Colonic mucosa (tissue), 4 donors: ENCODE measurements at regions of chr11 and their contacts with region 1.

Region 1: DNA sequence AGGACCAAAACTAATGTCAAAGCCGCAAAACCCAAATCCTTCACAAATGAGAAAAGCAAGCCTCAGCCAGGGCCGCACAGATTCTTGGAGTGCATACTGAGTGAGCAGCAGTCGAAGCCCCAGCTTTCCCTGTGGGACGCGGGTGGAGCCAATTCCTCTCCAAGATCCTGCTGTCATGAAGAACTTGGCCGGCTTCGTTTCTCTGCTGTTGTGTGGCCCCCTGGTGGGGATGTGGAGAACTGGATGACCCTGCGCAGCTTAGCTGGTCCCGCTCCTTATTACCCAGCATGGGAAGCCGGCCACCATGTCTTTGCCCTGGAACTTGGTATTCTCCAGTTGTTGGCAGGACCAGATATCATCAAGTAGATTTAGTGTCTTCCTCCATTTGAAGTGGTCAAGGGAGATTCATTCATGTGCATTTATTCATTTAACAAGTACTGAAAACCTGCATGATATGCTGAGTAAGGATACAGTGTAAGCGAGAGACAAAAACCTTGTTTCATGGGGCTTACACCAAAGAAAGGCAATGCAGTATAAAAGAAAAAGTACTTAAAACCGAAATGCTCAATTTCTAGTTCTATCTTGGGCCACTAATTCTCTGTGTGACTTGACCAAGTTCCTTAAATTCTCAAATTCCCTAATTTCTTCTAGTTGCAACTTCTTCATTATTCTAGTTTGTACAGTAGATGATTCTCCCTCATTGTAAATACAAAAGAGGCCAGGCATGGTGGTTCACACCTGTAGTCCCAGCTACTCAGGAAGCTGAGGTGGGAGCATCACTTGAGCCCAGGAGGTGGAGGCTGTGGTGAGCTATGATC is 56.7 kb upstream of the CRTAM start:
- DNase-seq: peak; percentile 83
- H3K4me3 ChIP-seq: no peak overlapping the region
- H3K27ac ChIP-seq: no peak overlapping the region
- H3K4me1 ChIP-seq: no peaks in the 10 kb centered on the region
- H3K27me3 ChIP-seq: no peaks in the 10 kb centered on the region
- CTCF ChIP-seq: peak; percentile 96

Region 2: GRCh38 chr11:122578168-122578825 is 203.3 kb before region 1 on chr11:
- intact Hi-C with region 1: loop called (anchors 2 kb)
- DNase-seq: no peak
- H3K4me3 ChIP-seq: no peak overlapping the region
- H3K27ac ChIP-seq: no peak overlapping the region
- H3K4me1 ChIP-seq: no peaks in the 10 kb centered on the region
- H3K27me3 ChIP-seq: no peaks in the 10 kb centered on the region
- CTCF ChIP-seq: no peak

Region 3: GRCh38 chr11:122633219-122633829 is 148.3 kb before region 1 on chr11:
- intact Hi-C with region 1: loop called (anchors 2 kb)
- DNase-seq: no peak
- H3K4me3 ChIP-seq: no peak overlapping the region
- H3K27ac ChIP-seq: no peak overlapping the region
- H3K4me1 ChIP-seq: no peaks in the 10 kb centered on the region
- H3K27me3 ChIP-seq: no peaks in the 10 kb centered on the region
- CTCF ChIP-seq: no peak

Region 4: DNA sequence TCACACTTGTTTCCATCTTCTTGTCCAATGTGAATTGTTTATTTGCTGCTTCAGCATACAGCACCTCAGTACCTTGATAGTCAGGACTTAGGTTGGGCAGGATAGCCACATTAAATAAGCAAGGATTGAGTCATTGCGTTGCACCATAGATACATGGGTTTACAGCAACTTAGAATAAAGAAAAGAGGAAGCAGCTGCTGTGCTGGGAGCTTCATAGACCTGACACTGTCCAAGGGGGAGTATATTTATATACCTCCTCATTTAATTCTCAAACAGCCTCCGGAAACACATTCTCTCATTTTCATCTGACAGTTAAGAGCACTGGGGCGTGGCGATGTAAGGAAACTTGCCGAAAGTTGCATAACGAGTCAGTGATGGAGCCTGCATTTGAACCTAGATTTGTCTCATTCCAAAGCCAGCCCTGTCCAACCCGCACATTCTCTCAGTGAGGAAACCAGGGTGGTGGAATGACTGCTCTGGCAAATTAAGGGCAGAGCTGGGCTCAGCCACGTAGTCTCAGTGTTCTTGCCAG is 83.9 kb before region 1 on chr11:
- intact Hi-C with region 1: no loop called
- DNase-seq: no peak
- H3K4me3 ChIP-seq: no peak overlapping the region
- H3K27ac ChIP-seq: no peak overlapping the region
- H3K4me1 ChIP-seq: no peaks in the 10 kb centered on the region
- H3K27me3 ChIP-seq: no peaks in the 10 kb centered on the region
- CTCF ChIP-seq: no peak